ENCODE measurements at regions of chr19 and their contacts with region 1.

Region 1: DNA sequence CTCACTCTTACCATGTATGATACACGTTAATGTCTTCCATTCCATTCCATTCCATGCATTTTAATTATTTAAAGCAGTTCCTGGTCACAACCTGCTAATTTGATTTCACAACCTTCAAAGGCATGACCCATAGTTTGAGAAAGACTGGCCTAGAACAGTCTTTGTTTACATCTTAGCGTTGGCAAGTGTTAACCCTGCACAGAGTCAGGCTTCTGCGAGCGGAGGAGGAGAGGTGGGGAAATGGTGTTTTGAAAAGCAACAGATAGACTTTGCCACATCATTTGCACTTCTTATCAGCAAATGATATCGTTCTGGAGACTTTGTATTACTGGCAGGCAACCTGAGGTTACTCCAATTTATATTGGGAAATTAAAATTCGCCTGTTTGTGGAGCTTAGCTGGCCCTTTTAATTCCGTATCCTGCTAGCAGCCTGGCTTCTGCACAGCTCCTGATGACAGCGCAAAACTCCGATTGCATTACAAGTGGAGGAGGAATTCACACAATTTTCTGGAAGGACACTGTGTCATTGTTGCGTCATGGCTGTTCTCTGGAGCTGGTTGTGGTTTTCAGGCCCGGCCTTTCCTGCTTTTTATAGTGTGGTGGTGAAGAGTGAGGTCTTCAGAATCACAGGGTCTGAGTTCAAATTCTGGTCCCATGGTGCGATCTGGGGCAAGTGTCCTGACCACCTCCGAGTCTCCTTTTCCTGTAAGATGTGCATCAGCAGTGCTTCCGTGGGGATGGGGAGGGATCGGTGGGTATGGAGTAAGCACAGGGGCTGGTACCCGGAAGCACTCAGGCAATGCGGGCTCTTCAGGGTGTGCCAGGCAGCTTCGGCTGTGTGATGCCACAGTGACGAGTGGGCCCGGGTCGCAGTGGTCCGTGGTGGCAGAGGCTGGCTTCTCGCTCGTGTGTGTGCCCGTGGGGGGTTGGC is 49.1 kb upstream of the EHD2 start:
- DNase-seq: peak; percentile 99
- H3K4me3 Mint-ChIP-seq: peak overlapping the region; percentile 52
- H3K27ac Mint-ChIP-seq: peak overlapping the region; percentile 81
- H3K4me1 Mint-ChIP-seq: peaks cover 49% of the 10 kb centered on the region
- H3K27me3 Mint-ChIP-seq: no peaks in the 10 kb centered on the region
- CTCF ChIP-seq: no peak

Region 2: DNA sequence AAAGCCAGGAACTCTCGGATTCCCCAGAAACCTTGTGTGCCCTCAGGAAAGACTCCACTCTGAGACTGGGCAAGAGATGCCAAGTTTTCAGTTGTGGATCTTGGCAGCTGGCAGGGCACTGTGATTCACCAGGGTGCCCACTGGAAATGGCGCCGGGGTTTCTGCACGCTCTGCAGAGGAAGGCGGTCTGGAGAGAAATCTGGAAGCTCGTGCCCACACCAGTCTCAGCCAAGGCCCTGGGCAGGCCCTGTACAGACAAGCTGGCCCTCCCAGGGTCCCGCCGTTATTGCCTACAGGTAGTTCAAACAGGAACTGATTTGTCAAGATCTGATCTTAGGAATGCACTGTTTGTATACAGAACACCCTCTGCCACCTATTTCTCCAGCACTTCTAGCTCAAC is 154.1 kb before region 1 on chr19:
- CTCF ChIA-PET with region 1: interaction called, 11 read pairs
- POLR2A ChIA-PET with region 1: interaction called, 46 read pairs
- intact Hi-C with region 1: loop called (anchors 10 kb)
- DNase-seq: peak; percentile 90
- H3K4me3 Mint-ChIP-seq: peak overlapping the region; percentile 64
- H3K27ac Mint-ChIP-seq: peak overlapping the region; percentile 46
- H3K4me1 Mint-ChIP-seq: peaks cover 47% of the 10 kb centered on the region
- H3K27me3 Mint-ChIP-seq: no peaks in the 10 kb centered on the region
- CTCF ChIP-seq: no peak

Region 3: DNA sequence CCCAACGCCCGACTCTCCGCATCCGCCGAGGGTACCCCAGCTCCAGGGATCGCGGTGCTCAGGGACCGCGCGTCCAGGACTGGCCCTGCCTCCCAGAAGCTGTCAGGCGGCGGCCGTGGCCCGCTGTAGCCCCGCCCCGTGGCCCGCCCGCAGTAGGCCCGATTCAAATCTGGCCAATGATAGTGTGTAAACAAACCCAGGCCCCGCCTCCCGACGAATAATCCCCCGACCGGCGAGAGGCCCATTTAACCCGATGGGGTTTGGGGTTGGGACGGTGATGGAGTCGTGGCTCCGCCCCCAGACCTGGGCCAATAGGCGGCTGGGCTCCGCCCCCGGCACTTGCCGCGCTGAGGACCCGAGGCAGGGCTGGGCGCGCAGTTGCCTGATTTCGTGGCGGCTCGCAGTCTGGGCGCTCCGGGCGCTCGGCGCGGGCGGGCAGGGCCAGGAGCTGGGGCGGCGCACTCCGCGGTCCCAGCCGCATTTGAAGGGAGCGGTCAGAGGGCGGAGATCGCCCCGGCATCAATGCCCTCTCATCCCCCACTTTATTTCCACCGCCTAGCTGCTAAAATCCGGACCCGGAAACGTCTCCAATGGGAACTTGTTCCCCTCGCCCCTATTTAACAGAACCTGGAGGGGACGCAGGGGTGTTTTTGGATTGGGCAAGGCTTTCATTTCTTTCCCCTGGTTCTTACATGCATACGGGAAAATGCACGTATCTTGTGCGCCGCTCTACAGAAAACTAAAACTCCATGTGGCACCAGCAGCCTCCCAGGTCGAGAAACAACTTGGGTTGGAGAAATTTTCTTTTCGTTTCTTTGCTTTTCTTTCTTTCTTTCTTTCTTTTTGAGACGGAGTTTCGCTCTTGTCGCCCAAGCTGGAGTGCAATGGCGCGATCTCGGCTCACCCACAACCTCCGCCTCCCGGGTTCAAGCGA is 63.6 kb before region 1 on chr19:
- CTCF ChIA-PET with region 1: interaction called, 4 read pairs
- POLR2A ChIA-PET with region 1: interaction called, 118 read pairs
- intact Hi-C with region 1: loop called (anchors 2 kb)
- DNase-seq: peak; percentile 100
- H3K4me3 Mint-ChIP-seq: peak overlapping the region; percentile 97
- H3K27ac Mint-ChIP-seq: peak overlapping the region; percentile 97
- H3K4me1 Mint-ChIP-seq: peaks cover 30% of the 10 kb centered on the region
- H3K27me3 Mint-ChIP-seq: no peaks in the 10 kb centered on the region
- CTCF ChIP-seq: no peak

Region 4: GRCh38 chr19:47619763-47620162 is 44.3 kb before region 1 on chr19:
- CTCF ChIA-PET with region 1: interaction called, 10 read pairs
- POLR2A ChIA-PET with region 1: interaction called, 8 read pairs
- intact Hi-C with region 1: no loop called
- DNase-seq: no peak
- H3K4me3 Mint-ChIP-seq: no peak overlapping the region
- H3K27ac Mint-ChIP-seq: no peak overlapping the region
- H3K4me1 Mint-ChIP-seq: peaks cover 13% of the 10 kb centered on the region
- H3K27me3 Mint-ChIP-seq: no peaks in the 10 kb centered on the region
- CTCF ChIP-seq: no peak